Activated CD4-positive, alpha-beta memory T cell treated with anti-CD3 and anti-CD28 coated beads for 36 hours (primary cell): ENCODE measurements at regions of chr11 and their contacts with region 1.

Region 1: DNA sequence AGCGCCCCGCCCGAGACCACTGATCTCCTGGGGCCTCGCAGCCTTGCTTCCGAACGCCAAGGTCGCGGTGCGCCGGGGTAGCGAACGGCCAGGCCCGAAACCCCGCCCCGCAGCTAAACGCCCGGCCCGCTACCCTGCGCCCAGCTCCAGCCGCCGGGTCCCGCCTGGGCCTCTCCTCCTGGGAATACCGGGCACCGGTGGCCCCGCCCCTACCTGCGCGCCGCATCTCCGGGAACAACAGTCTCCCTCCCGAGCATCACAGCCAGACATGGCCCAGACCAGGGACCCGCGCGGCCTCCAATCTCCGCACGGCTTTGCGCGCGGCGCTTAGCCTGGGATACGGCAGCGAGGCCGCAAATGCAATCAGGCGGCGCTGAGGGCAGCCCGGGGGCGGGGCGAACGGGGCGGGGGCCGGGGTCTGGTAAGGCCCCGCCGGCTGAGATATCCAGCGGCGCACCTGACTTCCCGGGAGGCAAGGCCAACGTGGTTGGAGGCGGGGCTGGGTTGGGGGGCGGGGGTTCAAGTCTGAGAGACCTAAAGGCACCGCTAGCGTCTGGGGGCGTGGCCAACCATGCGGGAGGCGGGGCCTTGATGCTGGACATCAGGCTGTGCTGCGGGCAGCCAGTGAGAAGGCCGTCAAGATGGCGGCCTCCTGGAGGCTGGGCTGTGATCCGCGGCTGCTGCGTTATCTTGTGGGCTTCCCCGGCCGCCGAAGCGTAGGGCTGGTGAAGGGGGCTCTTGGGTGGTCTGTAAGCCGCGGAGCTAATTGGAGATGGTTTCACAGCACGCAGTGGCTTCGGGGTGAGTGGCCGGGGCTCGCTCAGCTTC is at the starts of genes APIP and PDHX:
- DNase-seq: peak; percentile 98
- H3K4me3 Mint-ChIP-seq: peak within 1 kb of the TSS; percentile 91
- H3K27ac Mint-ChIP-seq: peak within 1 kb of the TSS; percentile 88
- H3K4me1 Mint-ChIP-seq: peaks cover 37% of the 10 kb centered on the region
- H3K27me3 Mint-ChIP-seq: no peaks in the 10 kb centered on the region
- total RNA-seq, gene APIP: 31.2 to 32.9 TPM
- total RNA-seq, gene PDHX: 34.5 to 35.5 TPM

Region 2: DNA sequence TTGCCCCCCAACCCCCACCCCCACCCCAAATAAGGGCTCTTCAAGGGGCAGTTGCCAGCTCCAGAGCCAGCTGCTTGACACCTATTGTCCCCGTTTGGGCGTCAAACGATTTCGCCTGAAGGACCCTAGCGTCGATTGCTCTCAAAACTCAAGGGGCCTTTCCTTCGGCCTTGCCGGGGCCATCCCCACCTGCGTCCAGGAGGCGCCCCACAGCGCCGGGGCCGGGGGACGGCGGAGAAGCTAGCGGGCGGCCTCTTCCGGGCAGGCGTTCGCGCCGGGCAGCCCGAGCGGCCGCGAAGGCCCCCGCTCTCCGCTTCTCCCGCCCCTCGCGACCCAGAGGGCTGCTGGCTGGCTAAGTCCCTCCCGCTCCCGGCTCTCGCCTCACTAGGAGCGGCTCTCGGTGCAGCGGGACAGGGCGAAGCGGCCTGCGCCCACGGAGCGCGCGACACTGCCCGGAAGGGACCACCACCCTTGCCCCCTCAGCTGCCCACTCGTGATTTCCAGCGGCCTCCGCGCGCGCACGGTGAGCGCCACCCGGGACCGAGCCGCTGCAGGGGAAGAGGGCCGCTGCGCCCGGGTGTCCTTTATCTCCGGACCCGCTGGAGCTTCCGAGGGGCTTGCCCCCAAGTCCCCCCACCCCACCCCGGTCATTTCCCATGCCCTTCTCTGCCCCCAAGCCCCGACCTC is 864.7 kb before region 1 on chr11 and contains the start of gene CAPRIN1:
- CTCF ChIA-PET with region 1: no interaction called
- POLR2A ChIA-PET with region 1: no interaction called
- intact Hi-C with region 1: loop called (anchors 1 kb)
- DNase-seq: peak; percentile 88
- H3K4me3 Mint-ChIP-seq: peak within 1 kb of the TSS; percentile 92
- H3K27ac Mint-ChIP-seq: peak within 1 kb of the TSS; percentile 96
- H3K4me1 Mint-ChIP-seq: peaks cover 18% of the 10 kb centered on the region
- H3K27me3 Mint-ChIP-seq: no peaks in the 10 kb centered on the region
- total RNA-seq, gene CAPRIN1: 261 to 264 TPM

Region 3: GRCh38 chr11:34926101-34926830 is 10.0 kb after region 1 on chr11:
- CTCF ChIA-PET with region 1: interaction called, 20 read pairs
- POLR2A ChIA-PET with region 1: no interaction called
- intact Hi-C with region 1: no loop called
- DNase-seq: no peak
- H3K4me3 Mint-ChIP-seq: no peak overlapping the region
- H3K27ac Mint-ChIP-seq: no peak overlapping the region
- H3K4me1 Mint-ChIP-seq: peaks cover 16% of the 10 kb centered on the region
- H3K27me3 Mint-ChIP-seq: no peaks in the 10 kb centered on the region

Region 4: GRCh38 chr11:35014351-35014750 is 98.1 kb after region 1 on chr11:
- CTCF ChIA-PET with region 1: no interaction called
- POLR2A ChIA-PET with region 1: no interaction called
- intact Hi-C with region 1: no loop called
- DNase-seq: no peak
- H3K4me3 Mint-ChIP-seq: no peak overlapping the region
- H3K27ac Mint-ChIP-seq: peak overlapping the region; percentile 92
- H3K4me1 Mint-ChIP-seq: peaks cover 41% of the 10 kb centered on the region
- H3K27me3 Mint-ChIP-seq: peaks cover 4% of the 10 kb centered on the region

Region 5: DNA sequence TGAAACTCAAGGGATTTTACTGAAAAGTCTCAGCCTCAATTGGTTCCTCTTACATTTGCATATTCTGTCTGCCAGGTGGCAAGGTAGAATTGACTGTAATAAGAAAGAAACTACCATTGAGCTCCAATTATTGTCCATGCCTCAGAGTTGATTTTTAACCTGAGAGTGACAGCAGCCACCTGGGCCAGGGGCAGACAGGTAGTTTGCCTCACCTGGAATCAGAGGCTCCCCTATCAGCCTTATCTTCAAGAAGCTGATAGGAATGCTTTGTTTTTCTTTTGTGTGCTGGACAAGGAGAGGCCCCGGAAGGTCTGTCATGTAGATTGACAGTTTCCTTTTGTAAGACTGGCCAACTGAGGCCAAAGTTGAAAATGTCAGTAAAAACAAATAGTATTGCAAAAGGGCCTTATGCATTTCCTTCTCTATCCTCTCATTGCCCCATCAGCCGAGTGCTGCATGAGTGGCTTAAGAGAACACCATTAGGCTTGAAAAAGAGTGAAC is 256.8 kb after region 1 on chr11:
- CTCF ChIA-PET with region 1: no interaction called
- POLR2A ChIA-PET with region 1: no interaction called
- intact Hi-C with region 1: loop called (anchors 5 kb)
- DNase-seq: no peak
- H3K4me3 Mint-ChIP-seq: peak overlapping the region; percentile 40
- H3K27ac Mint-ChIP-seq: peak overlapping the region; percentile 82
- H3K4me1 Mint-ChIP-seq: peaks cover 95% of the 10 kb centered on the region
- H3K27me3 Mint-ChIP-seq: no peaks in the 10 kb centered on the region

Region 6: DNA sequence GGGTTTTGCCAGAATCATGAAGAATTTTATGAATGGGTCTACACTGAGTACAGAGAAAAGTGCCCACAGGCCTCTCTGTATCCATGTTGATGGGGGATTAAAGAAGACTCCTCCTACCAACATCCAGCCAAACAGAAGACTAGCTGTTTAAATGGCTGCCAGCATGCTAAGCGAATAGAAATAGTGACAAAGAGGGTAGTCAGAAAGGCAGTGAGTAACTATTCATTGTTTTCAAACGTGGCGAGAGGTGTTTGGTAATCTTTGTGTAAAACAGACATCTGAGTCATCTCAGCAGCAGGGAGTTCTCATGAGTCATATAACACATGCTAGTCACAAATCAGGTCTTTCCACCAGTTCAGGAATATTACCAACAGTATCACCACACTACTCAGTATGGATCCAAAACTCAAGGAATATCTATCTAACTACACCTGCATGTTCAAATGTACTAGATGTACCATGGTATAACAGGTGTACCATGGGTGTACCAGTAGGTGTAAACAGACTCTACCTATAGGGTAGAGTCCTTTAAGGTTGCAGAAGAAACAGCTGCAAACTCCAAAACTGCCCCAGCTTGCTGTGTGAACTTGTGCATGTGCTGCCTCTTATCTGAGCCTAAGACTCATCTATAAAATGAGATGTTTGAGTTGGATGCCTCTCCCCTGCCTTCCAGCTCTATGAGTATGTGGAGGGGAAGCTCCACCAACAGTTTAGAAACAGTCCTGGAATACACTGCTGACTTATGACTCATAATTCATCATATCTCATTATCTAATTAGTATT is 421.1 kb after region 1 on chr11:
- CTCF ChIA-PET with region 1: no interaction called
- POLR2A ChIA-PET with region 1: interaction called, 3 read pairs
- intact Hi-C with region 1: loop called (anchors 2 kb)
- DNase-seq: peak; percentile 35
- H3K4me3 Mint-ChIP-seq: no peak overlapping the region
- H3K27ac Mint-ChIP-seq: peak overlapping the region; percentile 56
- H3K4me1 Mint-ChIP-seq: peaks cover 40% of the 10 kb centered on the region
- H3K27me3 Mint-ChIP-seq: peaks cover 2% of the 10 kb centered on the region